HepG2 (cell line): ENCODE measurements at regions of chr11 and their contacts with region 1.

Region 1: GRCh38 chr11:73625696-73626318 is 20.6 kb upstream of the PLEKHB1 start:
- DNase-seq: peak; percentile 59
- ATAC-seq: peak; percentile 85
- H3K4me3 ChIP-seq: no peak overlapping the region
- H3K27ac ChIP-seq: no peak overlapping the region
- H3K4me1 ChIP-seq: peaks cover 28% of the 10 kb centered on the region
- H3K27me3 ChIP-seq: no peaks in the 10 kb centered on the region
- CTCF ChIP-seq: peak; percentile 91
- EP300 ChIP-seq: no peak
- POLR2A ChIP-seq: no peak
- RAD21 ChIP-seq: peak; percentile 96

Region 2: DNA sequence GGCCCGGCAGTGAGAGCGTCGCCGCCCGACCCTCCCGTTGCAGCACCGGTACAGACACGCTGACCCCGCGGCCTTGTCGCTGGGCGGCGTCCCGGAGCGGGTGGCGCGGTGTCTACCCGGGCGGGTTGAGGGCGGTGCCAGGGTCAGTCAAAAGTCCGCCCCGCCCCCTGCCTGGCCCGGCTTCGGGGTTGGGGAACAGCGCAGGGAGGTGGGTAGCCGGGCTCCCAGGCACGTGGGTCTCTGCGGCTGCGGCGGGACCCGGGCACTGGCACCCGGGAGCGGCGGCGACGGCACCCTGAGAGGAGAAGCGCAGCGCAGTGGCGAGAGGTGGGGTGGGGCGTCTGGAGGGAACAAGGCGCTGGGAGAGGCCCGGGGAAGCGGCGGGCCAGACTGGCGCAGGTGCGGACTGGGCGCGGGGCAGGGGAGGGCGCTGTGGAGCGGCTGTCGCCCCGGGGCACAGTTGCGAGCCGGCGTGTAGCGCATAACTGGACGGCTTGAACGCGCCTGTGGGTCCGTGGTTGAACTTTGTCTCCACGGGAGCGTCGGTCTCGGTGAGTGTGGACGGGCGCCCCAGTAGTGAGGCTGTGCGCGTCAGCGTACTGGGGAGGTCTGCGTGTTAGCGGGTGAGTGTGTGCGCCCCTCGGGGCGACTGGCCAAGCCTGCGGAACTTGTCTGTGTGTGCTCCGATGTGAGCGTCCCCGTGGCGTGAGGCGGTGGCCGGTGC is 407.5 kb before region 1 on chr11 and contains the start of gene P2RY2:
- CTCF ChIA-PET with region 1: no interaction called
- POLR2A ChIA-PET with region 1: no interaction called
- in situ Hi-C with region 1: no loop called
- intact Hi-C with region 1: no loop called
- DNase-seq: peak; percentile 53
- ATAC-seq: peak; percentile 77
- H3K4me3 ChIP-seq: peak within 1 kb of the TSS; percentile 47 to 68 (median 57)
- H3K27ac ChIP-seq: no peak within 1 kb of the TSS
- H3K4me1 ChIP-seq: peaks cover 66% of the 10 kb centered on the region
- H3K27me3 ChIP-seq: peaks cover 2 to 23% of the 10 kb centered on the region in 2 experiments; a peak in 3 of 5 replicates
- CTCF ChIP-seq: peak; percentile 51
- EP300 ChIP-seq: no peak
- POLR2A ChIP-seq: no peak
- RAD21 ChIP-seq: peak; percentile 66
- total RNA-seq, gene P2RY2: 3.0 and 3.1 TPM in 2 replicates

Region 3: DNA sequence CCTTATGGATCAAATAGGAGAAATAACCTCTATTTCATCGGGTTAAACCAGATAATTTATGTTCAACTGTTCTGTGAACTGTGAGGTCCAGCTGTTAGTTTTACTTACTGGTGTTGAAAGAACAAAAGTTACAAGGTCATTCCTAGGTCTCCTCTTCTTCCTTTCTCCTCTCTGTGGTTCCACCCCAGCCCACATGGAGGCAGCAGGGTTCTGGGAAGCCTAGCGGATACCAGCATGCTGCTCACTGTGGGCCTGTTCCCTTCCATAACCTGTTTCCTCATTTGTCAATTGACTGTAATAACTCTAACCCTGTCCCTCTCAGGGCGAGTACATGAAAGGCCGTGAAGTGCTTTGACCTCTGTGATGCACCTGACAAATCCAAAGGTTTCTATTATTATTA is 221.8 kb before region 1 on chr11:
- CTCF ChIA-PET with region 1: interaction called, 5 read pairs
- POLR2A ChIA-PET with region 1: no interaction called
- in situ Hi-C with region 1: loop called (anchors 10 kb)
- intact Hi-C with region 1: loop called (anchors 10 kb)
- DNase-seq: peak; percentile 74
- ATAC-seq: peak; percentile 97
- H3K4me3 ChIP-seq: no peak overlapping the region
- H3K27ac ChIP-seq: no peak overlapping the region
- H3K4me1 ChIP-seq: peaks cover 8% of the 10 kb centered on the region
- H3K27me3 ChIP-seq: no peaks in the 10 kb centered on the region
- CTCF ChIP-seq: peak; percentile 91
- EP300 ChIP-seq: no peak
- POLR2A ChIP-seq: no peak
- RAD21 ChIP-seq: peak; percentile 83

Region 4: GRCh38 chr11:73478738-73479347 is 147.0 kb before region 1 on chr11:
- CTCF ChIA-PET with region 1: interaction called, 5 read pairs
- POLR2A ChIA-PET with region 1: no interaction called
- in situ Hi-C with region 1: no loop called
- intact Hi-C with region 1: loop called (anchors 2 kb)
- DNase-seq: peak; percentile 37
- ATAC-seq: peak; percentile 82
- H3K4me3 ChIP-seq: no peak overlapping the region
- H3K27ac ChIP-seq: no peak overlapping the region
- H3K4me1 ChIP-seq: peaks cover 8% of the 10 kb centered on the region
- H3K27me3 ChIP-seq: no peaks in the 10 kb centered on the region
- CTCF ChIP-seq: peak; percentile 74
- EP300 ChIP-seq: no peak
- POLR2A ChIP-seq: no peak
- RAD21 ChIP-seq: peak; percentile 50; the same call in 1 of the 2 replicates

Region 5: DNA sequence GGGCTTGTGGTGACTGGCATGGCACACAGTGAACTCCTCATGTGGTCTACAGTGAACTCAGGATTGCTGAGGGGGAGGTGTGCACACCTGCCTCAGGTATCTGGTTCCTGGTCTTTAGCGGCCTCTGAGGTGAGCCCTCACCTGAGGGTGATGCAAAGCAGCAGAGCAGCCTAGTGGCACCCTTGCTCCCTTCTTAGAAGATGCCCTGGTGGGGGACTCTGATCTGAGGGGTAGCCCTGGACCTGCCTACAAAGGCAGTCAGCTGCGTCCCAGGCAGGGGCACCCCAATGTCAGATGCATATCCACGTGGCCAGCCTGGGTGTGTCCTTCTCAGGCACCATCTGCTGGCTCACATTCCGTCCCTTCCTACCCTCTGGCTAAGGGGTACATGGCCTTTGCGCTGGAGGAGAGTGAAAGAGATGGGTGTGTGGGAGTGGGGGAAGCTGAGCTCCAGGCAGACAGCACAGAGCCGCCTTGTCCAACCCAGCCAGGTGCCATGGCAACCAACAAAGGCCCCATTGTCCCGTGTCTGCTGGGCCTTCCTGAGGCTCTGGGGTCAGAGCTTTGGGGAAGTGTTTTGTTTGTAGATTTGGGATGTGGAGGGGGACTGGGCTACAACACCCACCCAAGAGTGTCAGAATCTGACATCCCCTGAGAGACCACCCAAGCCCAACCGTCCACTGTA is 26.4 kb after region 1 on chr11:
- CTCF ChIA-PET with region 1: interaction called, 3 read pairs
- POLR2A ChIA-PET with region 1: interaction called, 9 read pairs
- in situ Hi-C with region 1: no loop called
- intact Hi-C with region 1: loop called (anchors 2 kb)
- DNase-seq: peak; percentile 97
- ATAC-seq: peak; percentile 87
- H3K4me3 ChIP-seq: peak overlapping the region in 1 of 3 experiments; percentile 26; a peak in 2 of 6 replicates
- H3K27ac ChIP-seq: peak overlapping the region; percentile 89
- H3K4me1 ChIP-seq: peaks cover 79% of the 10 kb centered on the region
- H3K27me3 ChIP-seq: no peaks in the 10 kb centered on the region
- CTCF ChIP-seq: peak; percentile 37
- EP300 ChIP-seq: peak; percentile 71 to 73
- POLR2A ChIP-seq: peak in 1 of 2 experiments; percentile 46; a peak in 1 of 4 replicates
- RAD21 ChIP-seq: no peak; the same call in 1 of the 2 replicates

Region 6: DNA sequence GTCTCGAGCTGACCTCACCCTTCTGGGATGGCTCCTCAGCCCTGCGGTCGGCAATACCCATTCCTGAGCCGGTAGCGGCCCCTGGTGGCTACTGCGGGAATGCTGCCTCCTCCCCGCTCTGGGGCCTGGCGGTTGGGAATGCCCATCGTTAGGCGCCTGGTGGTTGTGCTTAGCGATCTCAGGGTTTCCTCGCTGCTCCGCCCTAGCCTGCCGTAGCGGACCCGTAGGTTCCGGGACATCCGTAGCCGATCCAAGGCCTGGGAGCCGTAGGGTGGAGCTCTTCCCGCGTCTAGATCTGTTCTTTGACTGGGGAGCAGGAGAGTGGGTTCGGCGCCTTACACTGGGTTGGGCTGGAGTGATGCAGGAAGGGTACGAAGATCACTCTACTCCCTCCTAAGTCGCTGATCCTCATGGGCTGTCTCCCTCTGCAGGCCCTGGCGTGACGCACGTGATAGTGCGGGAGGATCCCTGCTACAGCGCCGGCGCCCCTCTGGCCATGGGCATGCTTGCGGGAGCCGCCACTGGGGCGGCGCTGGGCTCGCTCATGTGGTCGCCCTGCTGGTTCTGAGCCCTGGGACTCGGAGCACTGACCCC is 35.3 kb after region 1 on chr11:
- CTCF ChIA-PET with region 1: interaction called, 59 read pairs
- POLR2A ChIA-PET with region 1: interaction called, 6 read pairs
- in situ Hi-C with region 1: loop called (anchors 5 kb)
- intact Hi-C with region 1: loop called (anchors 1 kb)
- DNase-seq: no peak
- ATAC-seq: peak; percentile 81
- H3K4me3 ChIP-seq: no peak overlapping the region
- H3K27ac ChIP-seq: no peak overlapping the region
- H3K4me1 ChIP-seq: no peaks in the 10 kb centered on the region; the same call in 1 of the 2 replicates
- H3K27me3 ChIP-seq: no peaks in the 10 kb centered on the region
- CTCF ChIP-seq: peak; percentile 97
- EP300 ChIP-seq: no peak
- POLR2A ChIP-seq: no peak
- RAD21 ChIP-seq: peak; percentile 98